ENCODE measurements at regions of chr13 and their contacts with region 1.

Region 1: GRCh38 chr13:110463871-110464510 is 97.5 kb downstream of the RAB20 start:
- DNase-seq: no peak
- ATAC-seq: no peak
- H3K4me3 ChIP-seq: no peak overlapping the region
- H3K27ac ChIP-seq: no peak overlapping the region
- H3K4me1 ChIP-seq: no peaks in the 10 kb centered on the region
- H3K27me3 ChIP-seq: no peaks in the 10 kb centered on the region

Region 2: DNA sequence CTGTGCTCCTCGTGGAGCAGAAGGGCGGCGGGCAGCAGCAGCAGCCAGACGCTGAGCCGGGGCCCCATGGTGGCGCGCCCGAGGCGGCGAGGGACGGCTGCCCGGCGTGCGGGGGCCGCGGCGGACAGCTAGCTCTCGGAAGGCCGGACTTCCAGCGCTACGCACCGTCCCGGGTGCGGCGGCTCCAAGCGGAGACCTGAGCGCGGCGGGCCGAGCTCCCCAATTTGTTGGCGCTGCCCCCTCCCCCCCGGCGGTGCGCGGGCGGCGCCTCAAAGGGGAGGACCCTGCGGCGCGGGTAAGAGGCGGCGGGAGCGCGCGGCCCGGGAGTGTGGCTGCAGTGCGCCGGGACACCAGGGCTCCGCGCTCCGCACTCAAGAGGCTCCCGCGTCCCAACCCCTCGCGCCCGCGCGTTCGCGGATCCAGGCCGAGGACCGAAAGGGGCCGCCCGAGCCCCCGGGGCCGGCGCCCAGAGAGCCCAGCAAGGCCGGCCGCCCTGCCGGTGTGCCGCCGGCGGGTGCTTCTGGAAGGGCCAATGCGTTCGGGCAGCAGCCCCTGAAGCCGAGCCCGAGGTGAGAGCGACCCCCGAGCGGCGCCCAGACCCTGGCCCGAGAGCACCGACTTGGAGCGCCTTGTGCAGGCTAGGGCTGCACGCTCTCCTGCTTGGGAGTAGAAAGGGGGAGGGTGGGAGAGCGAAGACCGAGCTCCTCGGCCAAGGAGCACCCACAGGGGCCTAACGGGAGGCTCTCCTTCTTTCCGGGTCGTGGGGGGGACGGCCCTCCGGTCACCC is 156.8 kb before region 1 on chr13 and contains the starts of genes COL4A1 and COL4A2:
- intact Hi-C with region 1: no loop called
- DNase-seq: peak; percentile 80 to 94
- ATAC-seq: peak; percentile 85
- H3K4me3 ChIP-seq: peak within 1 kb of the TSS; percentile 55 to 89
- H3K27ac ChIP-seq: peak within 1 kb of the TSS; percentile 80 to 91
- H3K4me1 ChIP-seq: peaks cover 6 to 11% of the 10 kb centered on the region in 2 donors
- H3K27me3 ChIP-seq: no peaks in the 10 kb centered on the region
- total RNA-seq, gene COL4A1: 564 to 910 TPM
- total RNA-seq, gene COL4A2: 693 to 1,110 TPM

Region 3: GRCh38 chr13:110499621-110500281 is 35.8 kb after region 1 on chr13:
- intact Hi-C with region 1: loop called in 1 of 2 experiments (anchors 5 kb)
- DNase-seq: no peak
- ATAC-seq: no peak
- H3K4me3 ChIP-seq: no peak overlapping the region
- H3K27ac ChIP-seq: no peak overlapping the region
- H3K4me1 ChIP-seq: no peaks in the 10 kb centered on the region
- H3K27me3 ChIP-seq: no peaks in the 10 kb centered on the region

Region 4: DNA sequence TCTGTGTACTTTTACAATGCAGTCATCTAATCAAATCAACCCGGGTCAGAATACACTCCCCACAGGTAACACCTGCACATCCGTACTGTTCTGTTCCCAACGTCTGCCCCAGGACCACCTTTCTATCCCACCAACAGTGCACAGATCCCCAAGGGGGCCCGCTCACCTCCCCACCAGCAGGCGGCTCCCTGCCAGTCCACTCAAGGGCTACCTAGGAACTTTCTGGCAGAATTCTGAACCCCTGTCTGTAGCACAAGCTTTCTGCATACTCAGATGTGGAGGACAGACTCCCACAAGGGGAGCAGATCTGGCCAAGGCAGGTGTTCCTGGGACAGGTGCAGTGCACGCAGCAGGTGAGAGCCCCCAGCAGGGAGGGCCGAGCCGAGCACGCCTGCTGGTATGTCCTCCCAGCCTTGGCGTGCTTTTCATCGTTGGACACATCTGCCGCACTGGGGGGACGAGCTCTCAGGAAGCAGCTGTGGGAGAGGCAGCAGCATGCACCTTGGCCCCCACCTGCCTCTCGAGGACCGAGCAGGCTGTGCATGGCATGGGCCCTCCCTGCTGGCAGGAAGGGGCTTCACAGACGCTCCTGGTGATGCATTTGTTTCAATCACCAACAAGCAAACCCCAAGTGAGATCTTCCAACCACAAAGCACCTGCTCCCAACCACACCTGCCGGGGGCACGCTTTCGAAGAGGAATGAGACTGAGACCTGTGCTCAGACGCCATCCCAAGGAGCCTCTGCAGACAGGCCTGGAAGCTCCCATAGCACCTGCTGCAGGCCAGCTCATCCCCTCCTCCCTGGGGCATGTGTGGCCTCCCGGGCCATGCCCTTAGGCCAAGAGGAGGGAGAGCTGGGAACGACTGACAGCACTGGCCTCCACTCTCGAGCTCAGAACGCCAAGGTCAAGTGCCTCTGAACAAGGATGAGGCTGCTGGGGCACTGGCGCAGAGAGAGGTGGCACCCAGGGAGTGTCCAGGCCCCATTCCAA is 61.6 kb after region 1 on chr13:
- intact Hi-C with region 1: no loop called
- DNase-seq: peak in 1 of 2 donors; percentile 46
- ATAC-seq: no peak
- H3K4me3 ChIP-seq: no peak overlapping the region
- H3K27ac ChIP-seq: peak overlapping the region in 1 of 2 donors; percentile 64
- H3K4me1 ChIP-seq: peaks cover 0 to 2% of the 10 kb centered on the region in 2 donors
- H3K27me3 ChIP-seq: no peaks in the 10 kb centered on the region